Activated naive CD4-positive, alpha-beta T cell treated with anti-CD3 and anti-CD28 coated beads, Interleukin-2, amount 10 ng/mL, durations not matched to agents 7 days and 5 days (primary cell): ENCODE measurements at regions of chr5 and their contacts with region 1.

Region 1: GRCh38 chr5:54844905-54845566 is 140.4 kb downstream of the ESM1 start:
- DNase-seq: no peak
- H3K4me3 Mint-ChIP-seq: no peak overlapping the region
- H3K27ac Mint-ChIP-seq: no peak overlapping the region
- H3K4me1 Mint-ChIP-seq: peaks cover 10% of the 10 kb centered on the region
- H3K27me3 Mint-ChIP-seq: peaks cover 28% of the 10 kb centered on the region

Region 2: GRCh38 chr5:54517174-54518092 is 327.6 kb before region 1 on chr5 and contains the start of gene SNX18:
- CTCF ChIA-PET with region 1: interaction called, 100 read pairs
- DNase-seq: peak; percentile 93
- H3K4me3 Mint-ChIP-seq: peak within 1 kb of the TSS; percentile 83
- H3K27ac Mint-ChIP-seq: peak within 1 kb of the TSS; percentile 74
- H3K4me1 Mint-ChIP-seq: peaks cover 45% of the 10 kb centered on the region
- H3K27me3 Mint-ChIP-seq: peaks cover 23% of the 10 kb centered on the region

Region 3: DNA sequence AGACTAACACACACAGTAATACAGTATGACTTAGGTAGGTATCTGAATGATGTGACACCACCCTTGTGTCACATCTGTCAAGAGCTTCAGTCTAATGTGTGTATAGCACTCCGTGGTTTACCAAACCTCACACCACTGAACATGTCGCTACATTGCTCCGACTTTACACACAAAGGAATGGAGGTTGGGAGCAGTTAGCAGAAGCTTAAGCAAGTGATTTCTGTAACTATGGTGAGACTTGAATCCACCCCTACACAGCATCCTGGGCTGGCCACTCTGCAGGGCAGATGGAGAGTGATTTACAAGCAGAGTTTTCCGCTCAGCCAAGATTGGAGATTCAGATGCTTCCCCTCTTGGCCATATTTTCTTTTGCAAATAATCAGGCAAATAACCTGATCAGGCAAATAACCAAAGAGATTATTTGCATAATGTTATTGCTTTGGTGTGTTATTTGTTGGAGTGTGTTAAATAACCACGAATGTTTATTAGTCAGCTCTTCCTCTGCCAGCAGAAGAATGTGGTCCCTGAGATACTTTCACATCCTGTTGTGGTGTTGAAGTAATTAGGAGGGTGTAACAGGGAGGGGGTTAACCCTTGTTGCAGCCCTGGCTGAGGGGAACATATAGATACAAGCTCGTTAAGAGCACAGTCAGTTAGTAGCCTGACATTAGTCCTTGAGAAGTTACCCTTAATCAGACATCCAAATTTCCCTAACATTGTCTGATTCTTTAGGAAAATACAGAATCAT is 234.7 kb before region 1 on chr5:
- CTCF ChIA-PET with region 1: interaction called, 14 read pairs
- DNase-seq: peak; percentile 60
- H3K4me3 Mint-ChIP-seq: peak overlapping the region; percentile 45
- H3K27ac Mint-ChIP-seq: peak overlapping the region; percentile 94
- H3K4me1 Mint-ChIP-seq: peaks cover 35% of the 10 kb centered on the region
- H3K27me3 Mint-ChIP-seq: peaks cover 4% of the 10 kb centered on the region

Region 4: DNA sequence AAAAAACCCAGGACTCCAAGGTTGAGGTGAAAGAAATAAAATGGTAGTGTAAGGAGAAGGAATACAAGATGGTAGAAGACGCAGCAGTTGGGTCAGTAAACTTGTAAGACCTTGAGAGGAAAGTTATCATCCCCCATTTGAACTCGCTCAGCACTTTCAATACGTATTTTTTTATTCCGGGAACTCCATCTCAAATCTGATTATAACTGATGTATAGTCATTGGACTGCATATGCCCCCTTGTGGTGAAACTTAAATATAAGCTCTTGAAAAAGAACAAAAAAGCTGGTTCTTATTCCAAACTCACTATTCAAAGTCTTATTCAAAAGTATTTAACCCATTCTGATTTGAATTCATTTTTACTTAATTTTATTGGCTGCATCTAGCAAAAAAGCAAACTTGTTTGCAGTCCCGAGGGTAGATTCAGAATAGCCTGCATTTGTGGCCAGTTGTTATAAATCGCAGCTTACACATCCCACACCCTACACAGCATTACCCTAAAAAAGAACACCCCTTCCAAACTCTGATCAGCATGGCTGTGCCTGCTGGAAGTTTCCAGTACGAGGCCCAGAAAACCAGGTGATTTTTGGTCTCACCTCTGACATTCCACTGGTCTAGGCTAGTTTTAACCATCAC is 22.4 kb after region 1 on chr5:
- CTCF ChIA-PET with region 1: interaction called, 28 read pairs
- DNase-seq: no peak
- H3K4me3 Mint-ChIP-seq: no peak overlapping the region
- H3K27ac Mint-ChIP-seq: no peak overlapping the region
- H3K4me1 Mint-ChIP-seq: peaks cover 20% of the 10 kb centered on the region
- H3K27me3 Mint-ChIP-seq: peaks cover 42% of the 10 kb centered on the region

Region 5: DNA sequence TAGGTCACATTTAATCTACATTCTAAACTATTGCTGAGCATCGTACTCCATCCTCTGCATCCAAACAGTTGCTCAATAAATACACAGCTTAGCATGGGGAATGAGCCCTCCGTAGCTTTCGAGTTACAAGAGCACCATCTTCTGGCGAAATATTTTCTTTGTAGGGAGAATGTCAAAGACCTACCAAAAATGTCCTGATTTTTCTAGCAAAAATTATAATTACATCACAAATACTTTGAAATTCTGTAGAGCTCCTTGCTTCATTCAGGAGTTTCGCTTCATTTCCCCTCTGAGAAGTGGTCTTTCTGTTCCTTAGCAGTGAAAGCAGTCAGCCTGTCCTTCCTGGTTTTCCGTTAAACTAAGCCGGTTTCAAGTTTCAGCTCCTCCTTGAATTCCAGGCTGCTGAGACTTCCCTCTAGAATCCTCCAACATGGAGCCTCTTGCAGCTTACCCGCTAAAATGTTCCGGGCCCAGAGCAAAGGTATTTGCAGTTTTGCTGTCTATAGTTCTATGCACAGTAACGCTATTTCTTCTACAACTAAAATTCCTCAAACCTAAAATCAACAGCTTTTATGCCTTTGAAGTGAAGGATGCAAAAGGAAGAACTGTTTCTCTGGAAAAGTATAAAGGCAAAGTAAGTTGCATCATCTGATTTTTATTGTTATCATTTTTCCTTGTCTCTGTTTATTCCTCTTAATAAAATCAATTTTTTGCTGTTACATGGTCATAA is 314.9 kb after region 1 on chr5 and contains the start of gene GPX8:
- CTCF ChIA-PET with region 1: interaction called, 11 read pairs
- DNase-seq: peak; percentile 33
- H3K4me3 Mint-ChIP-seq: no peak within 1 kb of the TSS
- H3K27ac Mint-ChIP-seq: no peak within 1 kb of the TSS
- H3K4me1 Mint-ChIP-seq: peaks cover 3% of the 10 kb centered on the region
- H3K27me3 Mint-ChIP-seq: peaks cover 46% of the 10 kb centered on the region